ENCODE measurements at regions of chr4 and their contacts with region 1.

Region 1: DNA sequence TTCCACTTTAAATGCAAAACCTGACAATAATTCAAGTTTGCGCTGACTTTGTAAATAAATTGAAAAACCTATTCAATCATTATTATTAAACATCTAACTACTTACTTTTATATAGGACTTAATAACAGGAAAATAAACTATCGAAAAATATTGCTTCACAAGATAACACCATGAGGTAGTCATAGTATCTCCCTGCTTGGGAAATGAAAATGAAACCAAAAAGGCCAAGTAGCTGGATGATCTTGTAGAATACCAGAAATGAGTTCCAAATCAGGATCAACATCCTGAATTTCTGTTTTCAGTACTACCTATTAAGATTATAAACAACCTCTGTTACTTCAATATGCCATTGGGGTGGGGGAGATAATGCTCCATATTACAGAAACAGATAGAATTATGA is 58.9 kb downstream of the CHIC2 start:
- DNase-seq: no peak
- H3K4me3 ChIP-seq: no peak overlapping the region
- H3K27ac ChIP-seq: no peak overlapping the region
- H3K4me1 ChIP-seq: no peaks in the 10 kb centered on the region
- H3K27me3 ChIP-seq: no peaks in the 10 kb centered on the region
- CTCF ChIP-seq: no peak

Region 2: GRCh38 chr4:54050214-54050904 is 44.9 kb after region 1 on chr4:
- intact Hi-C with region 1: loop called (anchors 10 kb)
- DNase-seq: no peak
- H3K4me3 ChIP-seq: no peak overlapping the region
- H3K27ac ChIP-seq: no peak overlapping the region
- H3K4me1 ChIP-seq: no peaks in the 10 kb centered on the region
- H3K27me3 ChIP-seq: no peaks in the 10 kb centered on the region
- CTCF ChIP-seq: no peak

Measured in colonic mucosa (tissue), 4 donors.